ENCODE measurements at regions of chr12 and their contacts with region 1.

Region 1: GRCh38 chr12:119412811-119413794 is 78.6 kb downstream of the CCDC60 start:
- H3K4me3 ChIP-seq: no peak overlapping the region
- H3K27ac ChIP-seq: no peak overlapping the region
- H3K4me1 ChIP-seq: no peaks in the 10 kb centered on the region
- CTCF ChIP-seq: peak; percentile 40; the same call in 1 of the 2 replicates

Region 2: DNA sequence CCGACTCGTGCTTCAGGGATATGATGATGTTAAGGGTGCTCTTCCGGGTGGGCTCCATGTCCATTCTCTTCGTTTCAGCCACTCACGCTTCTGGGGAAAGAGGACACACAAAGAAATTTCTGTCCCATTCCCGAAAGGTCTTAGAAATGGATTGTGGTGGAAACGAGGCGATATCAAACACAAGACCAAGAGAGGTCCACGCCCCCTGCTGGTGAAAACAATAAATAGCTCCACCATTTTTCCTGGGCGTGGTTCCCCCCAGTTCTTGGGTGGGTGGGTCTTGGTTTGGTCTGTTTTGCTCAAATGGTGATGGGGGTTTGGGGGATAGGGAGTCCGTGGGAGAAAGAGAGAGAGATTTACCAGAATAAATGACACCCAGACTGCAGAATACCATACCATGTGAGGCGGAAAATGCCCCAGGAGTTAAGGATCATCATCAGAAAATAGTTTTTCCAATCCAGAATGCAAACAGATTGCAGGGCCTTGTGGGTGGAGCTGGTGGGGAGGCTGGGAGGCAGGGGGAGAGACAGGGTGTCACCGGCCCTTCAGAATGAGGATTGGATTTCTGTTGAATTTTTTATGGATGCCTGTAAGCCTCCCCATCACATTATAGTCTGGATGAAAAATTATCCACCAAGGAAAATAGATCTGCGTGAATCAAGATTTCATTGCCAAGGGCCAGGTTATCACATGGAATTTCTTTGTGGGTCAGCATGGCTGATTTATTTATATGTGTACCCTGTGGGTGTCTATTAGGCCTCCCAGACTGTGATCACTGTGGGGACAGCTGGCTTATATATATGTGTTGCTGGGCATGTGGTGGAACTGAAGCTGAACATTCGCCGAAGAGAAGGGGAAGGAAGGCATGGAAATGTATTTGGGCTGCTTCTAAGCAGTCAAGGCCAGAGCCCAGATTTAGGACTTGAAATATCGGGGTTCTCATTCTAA is 376.0 kb before region 1 on chr12:
- CTCF ChIA-PET with region 1: interaction called, 13 read pairs
- POLR2A ChIA-PET with region 1: no interaction called
- H3K4me3 ChIP-seq: no peak overlapping the region
- H3K27ac ChIP-seq: no peak overlapping the region
- H3K4me1 ChIP-seq: no peaks in the 10 kb centered on the region
- CTCF ChIP-seq: no peak

Region 3: GRCh38 chr12:119249326-119250155 is 163.6 kb before region 1 on chr12:
- CTCF ChIA-PET with region 1: no interaction called
- POLR2A ChIA-PET with region 1: no interaction called
- H3K4me3 ChIP-seq: no peak overlapping the region
- H3K27ac ChIP-seq: no peak overlapping the region
- H3K4me1 ChIP-seq: no peaks in the 10 kb centered on the region
- CTCF ChIP-seq: no peak

Region 4: GRCh38 chr12:119399301-119399700 is 13.8 kb before region 1 on chr12:
- CTCF ChIA-PET with region 1: interaction called, 12 read pairs
- POLR2A ChIA-PET with region 1: no interaction called
- H3K4me3 ChIP-seq: no peak overlapping the region
- H3K27ac ChIP-seq: no peak overlapping the region
- H3K4me1 ChIP-seq: no peaks in the 10 kb centered on the region
- CTCF ChIP-seq: no peak

Region 5: DNA sequence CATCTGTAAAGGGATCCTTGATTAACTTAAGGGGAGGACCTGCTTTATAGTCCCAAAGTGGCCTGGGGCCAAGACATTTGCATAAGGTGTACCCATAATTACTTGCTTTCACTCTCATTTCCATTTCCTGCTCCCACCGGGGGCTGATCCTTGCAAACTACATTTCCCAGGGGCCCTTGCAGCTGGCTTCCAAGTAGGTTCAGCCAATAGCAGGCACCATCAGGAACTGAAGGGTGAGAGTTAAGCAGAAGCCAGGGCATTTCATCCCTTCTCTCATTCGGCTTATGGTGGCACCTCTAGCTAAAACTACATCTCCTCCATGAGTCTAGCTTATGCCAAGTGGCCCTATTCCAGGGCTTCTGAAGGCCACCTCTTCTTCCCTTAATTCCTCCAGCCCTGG is 10.2 kb after region 1 on chr12:
- CTCF ChIA-PET with region 1: interaction called, 13 read pairs
- POLR2A ChIA-PET with region 1: no interaction called
- H3K4me3 ChIP-seq: no peak overlapping the region
- H3K27ac ChIP-seq: no peak overlapping the region
- H3K4me1 ChIP-seq: no peaks in the 10 kb centered on the region
- CTCF ChIP-seq: no peak

Region 6: DNA sequence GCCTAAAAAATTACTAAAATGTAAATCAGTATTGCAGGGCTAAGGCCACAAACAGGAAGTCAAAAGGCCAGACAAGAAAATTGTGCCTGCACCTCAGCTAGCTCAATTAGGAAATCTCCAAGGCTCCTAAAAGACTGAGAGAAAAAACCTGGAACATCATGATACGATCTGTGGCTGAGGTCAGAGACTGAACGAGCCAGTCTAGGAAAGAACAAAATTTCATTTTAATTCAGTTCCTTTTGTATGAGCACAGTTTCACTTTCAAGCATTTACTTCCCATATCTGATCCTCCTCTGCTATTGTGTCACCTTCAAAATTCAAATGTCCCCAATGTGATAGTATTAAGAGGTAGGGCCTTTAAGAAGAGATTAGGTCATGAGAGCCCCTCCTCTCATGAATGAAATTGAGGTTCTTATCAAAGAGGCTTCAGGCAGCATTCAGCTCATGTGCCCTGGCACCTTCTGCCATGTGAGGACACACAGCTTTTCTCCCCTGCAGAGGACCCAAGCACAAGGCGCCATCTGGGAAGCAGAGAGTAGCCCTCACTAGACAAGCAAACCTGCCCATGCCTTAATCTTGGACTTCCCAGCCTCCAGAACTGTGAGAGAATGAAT is 269.6 kb after region 1 on chr12:
- CTCF ChIA-PET with region 1: no interaction called
- POLR2A ChIA-PET with region 1: no interaction called
- H3K4me3 ChIP-seq: no peak overlapping the region
- H3K27ac ChIP-seq: no peak overlapping the region
- H3K4me1 ChIP-seq: no peaks in the 10 kb centered on the region
- CTCF ChIP-seq: no peak

Measured in HEK293 (cell line).